CD14-positive monocyte (primary cell): ENCODE measurements at regions of chr6 and their contacts with region 1.

Region 1: DNA sequence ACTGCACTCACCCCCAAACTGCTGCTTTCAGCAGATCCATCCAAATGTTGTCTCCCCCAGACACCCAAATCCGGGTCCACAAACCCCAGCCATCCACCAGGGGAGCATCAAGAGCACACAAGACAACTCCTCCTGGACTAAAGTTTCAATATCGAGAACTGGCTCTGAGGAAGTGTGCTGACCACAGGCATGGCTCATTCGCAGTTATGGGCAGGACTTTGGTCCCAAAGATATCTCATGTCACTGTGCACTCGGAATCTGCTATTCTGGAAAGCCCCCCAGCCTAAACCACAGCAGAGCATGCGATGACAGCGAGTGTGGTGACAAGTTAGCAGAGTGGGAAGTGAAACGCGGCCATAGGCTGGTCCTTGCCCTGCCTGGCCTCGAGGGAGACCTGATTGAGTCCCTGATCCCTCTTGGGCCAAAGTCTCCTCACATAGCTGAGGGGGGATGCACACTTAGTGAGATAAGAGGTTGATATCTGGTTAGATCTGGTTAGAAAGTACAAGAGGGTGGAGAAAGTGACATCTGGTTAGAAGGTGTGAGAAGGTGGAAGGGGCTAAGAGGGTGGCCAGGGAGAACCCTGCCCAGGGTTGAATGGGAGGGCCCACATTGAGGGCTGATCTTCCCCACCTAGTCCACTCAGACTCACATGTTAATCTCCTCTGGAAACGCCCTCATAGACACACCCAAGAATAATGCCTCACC is 149.7 kb downstream of the MRPL14 start:
- DNase-seq: peak; percentile 84 to 96 (median 90)
- H3K4me3 ChIP-seq: no peak overlapping the region
- H3K4me3 Mint-ChIP-seq: peak overlapping the region; percentile 43 to 52
- H3K27ac ChIP-seq: peak overlapping the region in 1 of 2 donors; percentile 66
- H3K27ac Mint-ChIP-seq: peak overlapping the region; percentile 28 to 97 (median 93)
- H3K4me1 ChIP-seq: peaks cover 10 to 16% of the 10 kb centered on the region in 2 donors
- H3K4me1 Mint-ChIP-seq: peaks cover 29% of the 10 kb centered on the region
- H3K27me3 ChIP-seq: no peaks in the 10 kb centered on the region
- H3K27me3 Mint-ChIP-seq: peaks cover 13 to 25% (median 17%) of the 10 kb centered on the region in 3 donors
- CTCF ChIP-seq: peak; percentile 52

Region 2: DNA sequence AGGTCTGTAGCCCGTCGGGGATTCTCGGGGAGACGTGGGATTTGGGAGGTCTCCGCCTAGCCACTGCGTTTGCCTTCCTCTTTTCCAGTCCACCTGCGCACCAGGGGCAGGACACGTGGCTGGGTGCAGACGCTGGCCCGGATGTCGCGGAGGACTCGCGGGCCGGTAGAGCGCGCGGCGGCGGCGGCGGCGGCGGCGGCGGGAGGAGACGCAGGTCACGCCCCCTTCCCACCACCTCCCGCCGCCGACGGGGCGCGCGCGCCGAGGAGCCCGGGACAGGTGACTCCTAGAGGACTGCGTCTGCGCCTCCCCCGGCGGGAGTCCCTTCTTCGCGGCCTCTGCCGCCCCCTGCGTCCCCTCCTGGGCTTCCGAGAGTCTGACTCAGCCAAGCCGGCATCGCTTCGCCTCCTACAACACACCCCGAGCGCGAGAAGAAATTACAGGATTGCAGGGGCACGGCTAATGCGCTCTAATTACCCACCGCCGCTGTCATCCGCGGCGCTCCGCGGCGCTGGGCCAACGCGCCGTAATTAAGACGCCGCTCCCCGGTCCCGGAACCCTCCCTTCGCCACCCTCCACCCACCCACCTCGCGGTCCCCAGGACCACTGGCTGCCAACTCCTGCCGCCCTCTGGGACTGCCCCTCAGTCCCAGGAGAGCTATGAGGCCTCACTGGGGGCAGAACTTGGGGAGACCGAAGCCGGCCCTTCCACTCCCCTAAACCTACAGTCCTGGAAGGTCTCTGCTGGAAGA is 25.2 kb after region 1 on chr6:
- intact Hi-C with region 1: loop called in 1 of 2 experiments (anchors 2 kb)
- DNase-seq: peak; percentile 54 to 83 (median 58)
- H3K4me3 ChIP-seq: peak overlapping the region in 2 of 3 experiments; percentile 24 to 55
- H3K4me3 Mint-ChIP-seq: peak overlapping the region; percentile 65 to 84
- H3K27ac ChIP-seq: no peak overlapping the region
- H3K27ac Mint-ChIP-seq: peak overlapping the region in 5 of 7 donors; percentile 6 to 78 (median 50)
- H3K4me1 ChIP-seq: peaks cover 20 to 35% of the 10 kb centered on the region in 2 donors
- H3K4me1 Mint-ChIP-seq: peaks cover 33% of the 10 kb centered on the region
- H3K27me3 ChIP-seq: peaks cover 34 to 68% of the 10 kb centered on the region in 2 donors
- H3K27me3 Mint-ChIP-seq: peaks cover 67 to 82% (median 80%) of the 10 kb centered on the region in 3 donors
- CTCF ChIP-seq: no peak

Region 3: GRCh38 chr6:44010411-44011349 is 33.1 kb after region 1 on chr6:
- intact Hi-C with region 1: loop called (anchors 5 kb)
- DNase-seq: peak; percentile 72 to 82 (median 80)
- H3K4me3 ChIP-seq: no peak overlapping the region
- H3K4me3 Mint-ChIP-seq: peak overlapping the region in 1 of 2 donors; percentile 67
- H3K27ac ChIP-seq: peak overlapping the region in 1 of 2 donors; percentile 62
- H3K27ac Mint-ChIP-seq: peak overlapping the region in 5 of 7 donors; percentile 73 to 87 (median 83)
- H3K4me1 ChIP-seq: peaks cover 22 to 43% of the 10 kb centered on the region in 2 donors
- H3K4me1 Mint-ChIP-seq: peaks cover 34% of the 10 kb centered on the region
- H3K27me3 ChIP-seq: peaks cover 0 to 26% of the 10 kb centered on the region in 2 donors
- H3K27me3 Mint-ChIP-seq: peaks cover 15 to 36% (median 28%) of the 10 kb centered on the region in 3 donors
- CTCF ChIP-seq: no peak

Region 4: DNA sequence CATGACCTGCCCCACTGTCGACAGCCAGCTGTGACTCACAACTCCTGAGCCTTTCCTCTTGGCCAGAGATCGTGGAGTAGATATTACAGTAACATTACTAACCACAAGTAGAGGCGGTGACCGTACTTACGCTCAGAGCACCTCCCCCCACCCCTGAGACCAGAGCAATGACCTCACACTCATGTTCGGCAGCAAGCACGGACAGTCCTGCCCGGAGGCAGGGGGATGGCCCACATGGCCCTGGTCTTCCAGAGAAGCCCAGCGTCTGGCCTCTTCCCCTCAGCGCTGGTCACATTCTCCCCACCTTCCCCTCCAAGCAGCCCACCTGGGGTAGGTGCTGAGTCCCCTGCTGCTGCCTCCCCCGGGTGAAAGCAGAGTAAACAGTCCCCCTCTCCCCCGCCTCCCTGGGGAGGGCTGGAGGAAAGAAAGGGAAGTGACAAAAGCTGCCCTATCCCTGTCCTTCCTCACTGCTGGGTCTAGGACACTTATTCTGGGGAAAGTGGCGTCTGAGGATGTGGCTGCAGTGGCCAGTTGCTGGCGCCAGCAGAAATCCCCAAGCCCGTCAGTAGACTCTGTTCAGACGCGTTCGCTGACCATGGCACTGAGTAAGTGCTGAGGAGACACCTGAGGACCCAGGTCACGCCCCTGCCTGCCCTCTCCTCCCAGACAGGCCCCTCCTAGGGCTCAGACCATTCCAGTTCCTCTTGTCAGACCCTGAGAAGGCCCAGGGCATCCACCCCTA is 81.2 kb after region 1 on chr6:
- intact Hi-C with region 1: loop called in 1 of 2 experiments (anchors 2 kb)
- DNase-seq: peak; percentile 98 to 100 (median 99)
- H3K4me3 ChIP-seq: peak overlapping the region in 2 of 3 experiments; percentile 26 to 34
- H3K4me3 Mint-ChIP-seq: peak overlapping the region; percentile 71 to 83
- H3K27ac ChIP-seq: peak overlapping the region; percentile 99
- H3K27ac Mint-ChIP-seq: peak overlapping the region; percentile 99 to 100 (median 100)
- H3K4me1 ChIP-seq: peaks cover 58 to 70% of the 10 kb centered on the region in 2 donors
- H3K4me1 Mint-ChIP-seq: peaks cover 75% of the 10 kb centered on the region
- H3K27me3 ChIP-seq: no peaks in the 10 kb centered on the region
- H3K27me3 Mint-ChIP-seq: peaks cover 0 to 10% (median 3%) of the 10 kb centered on the region in 3 donors
- CTCF ChIP-seq: no peak